ENCODE measurements at regions of chr6 and their contacts with region 1.

Region 1: GRCh38 chr6:16464045-16464444 is 225.7 kb downstream of the GMPR start:
- DNase-seq: no peak
- ATAC-seq: no peak
- H3K4me3 ChIP-seq: no peak overlapping the region
- H3K27ac ChIP-seq: no peak overlapping the region
- H3K4me1 ChIP-seq: peaks cover 0 to 6% (median 0%) of the 10 kb centered on the region in 12 donors
- H3K27me3 ChIP-seq: no peaks in the 10 kb centered on the region
- CTCF ChIP-seq: no peak
- POLR2A ChIP-seq: no peak

Region 2: DNA sequence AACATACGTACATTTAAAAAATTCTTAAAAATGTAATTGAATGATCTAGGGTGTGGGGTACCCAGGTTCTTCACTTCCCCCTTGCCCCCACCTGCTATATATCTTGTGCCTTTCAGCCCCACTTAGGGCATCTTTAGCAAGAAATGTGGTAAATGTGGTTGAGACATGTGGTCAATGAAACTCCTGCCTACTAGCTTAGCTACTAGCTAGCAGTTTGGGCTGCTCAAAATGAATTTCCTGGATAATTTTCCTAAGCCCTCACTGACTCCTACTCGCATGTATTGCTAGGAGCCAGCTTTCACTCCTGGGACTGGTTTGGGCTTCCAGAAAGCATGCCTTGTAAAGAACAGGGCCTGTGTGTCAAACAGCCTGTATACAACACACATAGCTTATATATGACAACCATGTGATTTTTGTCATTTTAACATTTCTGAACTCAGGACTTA is 39.9 kb after region 1 on chr6:
- intact Hi-C with region 1: loop called in 1 of 10 experiments (anchors 1 kb)
- DNase-seq: no peak
- ATAC-seq: peak in 1 of 4 donors; percentile 13
- H3K4me3 ChIP-seq: no peak overlapping the region
- H3K27ac ChIP-seq: no peak overlapping the region
- H3K4me1 ChIP-seq: peaks cover 0 to 26% (median 14%) of the 10 kb centered on the region in 12 donors
- H3K27me3 ChIP-seq: no peaks in the 10 kb centered on the region
- CTCF ChIP-seq: no peak
- POLR2A ChIP-seq: no peak

Region 3: GRCh38 chr6:17149571-17149970 is 685.5 kb after region 1 on chr6:
- intact Hi-C with region 1: no loop called
- DNase-seq: no peak
- ATAC-seq: no peak
- H3K4me3 ChIP-seq: no peak overlapping the region
- H3K27ac ChIP-seq: no peak overlapping the region
- H3K4me1 ChIP-seq: no peaks in the 10 kb centered on the region
- H3K27me3 ChIP-seq: no peaks in the 10 kb centered on the region
- CTCF ChIP-seq: no peak
- POLR2A ChIP-seq: no peak

Measured in heart left ventricle (tissue), 16 donors.